Activated T-helper 1 cell treated with anti-CD3 and anti-CD28 coated beads, Interleukin-12 subunit alpha, Interleukin-12 subunit beta, Interleukin-2, Interleukin-4 antibody, amounts not matched to agents 30 ng/mL and 10 ng/mL and 1 ng/mL, durations not matched to agents 14 hours and 24 hours and 36 hours (primary cell): ENCODE measurements at regions of chr20 and their contacts with region 1.

Region 1: DNA sequence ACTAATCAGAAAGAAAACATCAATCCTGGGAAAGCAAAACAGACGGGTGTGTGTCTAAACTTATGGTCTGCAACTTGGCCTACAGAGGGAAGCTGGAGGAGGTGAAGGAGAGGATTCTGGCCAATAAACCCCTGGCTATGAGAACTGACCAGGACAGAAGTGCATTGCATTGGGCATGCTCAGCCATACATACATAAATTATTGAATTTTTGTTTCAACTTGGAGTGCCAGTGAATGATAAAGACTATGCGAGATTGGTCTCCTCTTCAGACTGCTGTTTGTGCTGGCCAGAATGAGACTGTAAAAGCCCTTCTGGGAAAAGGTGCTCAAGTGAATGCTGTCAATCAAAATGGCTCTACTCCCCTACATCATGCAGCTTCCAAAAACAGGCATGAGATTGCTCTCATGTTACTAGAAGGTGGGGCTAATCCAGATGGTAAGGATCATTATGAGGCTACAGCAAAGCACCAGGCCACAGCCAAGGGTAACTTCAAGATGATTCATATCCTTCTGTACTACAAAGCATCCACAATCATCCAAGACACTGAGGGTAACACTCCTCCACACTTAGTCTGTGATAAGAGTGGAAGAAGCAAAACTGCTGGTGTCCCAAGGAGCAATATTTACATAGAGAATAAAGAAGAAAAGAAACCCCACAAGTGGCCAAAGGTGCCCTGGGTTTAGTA is 17.4 kb downstream of the ADNP start:
- DNase-seq: peak; percentile 6
- H3K4me3 Mint-ChIP-seq: no peak overlapping the region
- H3K27ac Mint-ChIP-seq: peak overlapping the region; percentile 52
- H3K4me1 Mint-ChIP-seq: peaks cover 73% of the 10 kb centered on the region
- H3K27me3 Mint-ChIP-seq: no peaks in the 10 kb centered on the region

Region 2: GRCh38 chr20:50815162-50815989 is 98.5 kb before region 1 on chr20:
- intact Hi-C with region 1: loop called (anchors 5 kb)
- DNase-seq: no peak
- H3K4me3 Mint-ChIP-seq: peak overlapping the region; percentile 61
- H3K27ac Mint-ChIP-seq: peak overlapping the region; percentile 77
- H3K4me1 Mint-ChIP-seq: peaks cover 38% of the 10 kb centered on the region
- H3K27me3 Mint-ChIP-seq: peaks cover 4% of the 10 kb centered on the region

Region 3: GRCh38 chr20:50895111-50895830 is 18.6 kb before region 1 on chr20:
- intact Hi-C with region 1: loop called (anchors 2 kb)
- DNase-seq: no peak
- H3K4me3 Mint-ChIP-seq: no peak overlapping the region
- H3K27ac Mint-ChIP-seq: no peak overlapping the region
- H3K4me1 Mint-ChIP-seq: peaks cover 13% of the 10 kb centered on the region
- H3K27me3 Mint-ChIP-seq: no peaks in the 10 kb centered on the region

Region 4: DNA sequence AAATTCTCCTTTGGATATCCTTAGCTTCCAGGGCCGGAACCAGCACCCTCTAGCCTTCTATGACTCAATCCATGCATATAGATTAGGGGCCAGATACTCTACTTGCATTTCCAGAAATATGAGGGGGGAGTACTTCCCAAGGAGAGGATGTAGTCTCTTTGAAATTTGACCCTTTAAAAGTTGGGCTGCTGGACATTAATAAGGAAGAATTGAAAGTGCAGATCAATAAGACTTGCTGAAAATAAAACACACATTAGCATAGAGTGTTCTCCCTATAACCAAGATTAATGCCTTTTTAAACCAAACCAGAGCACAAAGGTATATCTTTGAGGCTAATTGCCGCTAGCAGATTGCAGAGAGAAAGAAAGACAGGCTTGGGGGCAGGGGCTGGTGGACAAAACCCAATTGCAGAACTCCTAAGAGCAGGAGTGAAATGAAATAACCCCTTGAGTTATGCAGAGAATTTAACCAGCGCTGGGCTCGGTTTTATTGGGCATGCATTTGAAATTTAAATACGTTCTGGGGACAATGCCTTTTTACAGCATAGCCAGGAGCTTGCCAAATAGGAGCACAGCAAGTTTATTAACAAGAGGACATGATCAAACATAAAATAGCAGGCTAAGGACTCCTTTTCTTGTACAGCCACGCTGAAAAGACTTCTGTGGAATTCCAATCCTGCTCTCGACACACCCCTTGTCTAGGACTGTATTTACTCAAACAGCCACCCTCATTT is 996.7 kb after region 1 on chr20:
- intact Hi-C with region 1: no loop called
- DNase-seq: no peak
- H3K4me3 Mint-ChIP-seq: no peak overlapping the region
- H3K27ac Mint-ChIP-seq: no peak overlapping the region
- H3K4me1 Mint-ChIP-seq: no peaks in the 10 kb centered on the region
- H3K27me3 Mint-ChIP-seq: peaks cover 10% of the 10 kb centered on the region